ENCODE measurements at regions of chr11 and their contacts with region 1.

Region 1: GRCh38 chr11:95835768-95836488 is 45.6 kb downstream of the CEP57 start:
- DNase-seq: peak; percentile 60
- ATAC-seq: peak; percentile 93
- H3K4me3 Mint-ChIP-seq: no peak overlapping the region
- H3K27ac Mint-ChIP-seq: no peak overlapping the region
- H3K4me1 Mint-ChIP-seq: peaks cover 6% of the 10 kb centered on the region
- H3K27me3 Mint-ChIP-seq: no peaks in the 10 kb centered on the region
- CTCF ChIP-seq: peak; percentile 85

Region 2: DNA sequence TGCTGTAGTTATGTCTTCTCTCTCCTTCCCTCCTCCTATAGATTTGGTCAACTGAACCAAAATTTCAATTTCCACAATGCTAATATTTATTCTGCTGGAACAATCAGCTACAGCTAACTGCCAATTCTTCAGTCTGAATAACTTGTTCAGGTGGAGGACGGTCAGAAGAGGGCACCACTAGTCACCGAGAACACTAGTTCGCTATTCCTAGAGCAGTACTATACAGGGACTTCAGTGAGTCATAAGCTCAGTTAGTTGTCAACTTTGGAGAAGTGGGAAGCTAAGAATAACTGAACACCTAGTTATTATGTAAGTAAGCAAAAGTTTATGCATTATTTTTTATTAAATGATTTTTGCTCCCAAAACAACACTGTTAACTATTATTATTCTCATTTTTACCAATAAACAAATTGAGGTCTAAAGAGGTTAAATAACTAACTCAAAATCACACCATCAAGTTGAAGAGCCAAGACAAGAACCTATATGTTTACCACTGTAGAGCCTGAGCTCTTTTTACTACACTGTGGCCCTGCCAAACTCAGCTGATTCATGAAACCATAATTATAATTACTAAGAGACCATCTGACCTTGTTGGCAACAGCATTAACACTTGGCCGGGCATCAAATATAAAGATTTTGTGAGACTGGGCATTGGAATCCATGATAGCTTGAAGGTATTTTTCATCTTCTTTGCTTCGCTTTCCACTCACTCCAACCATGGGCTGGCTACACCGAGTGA is 13.3 kb after region 1 on chr11:
- CTCF ChIA-PET with region 1: interaction called, 14 read pairs
- POLR2A ChIA-PET with region 1: no interaction called
- intact Hi-C with region 1: no loop called
- DNase-seq: peak; percentile 44
- ATAC-seq: peak; percentile 66
- H3K4me3 Mint-ChIP-seq: no peak overlapping the region
- H3K27ac Mint-ChIP-seq: no peak overlapping the region
- H3K4me1 Mint-ChIP-seq: peaks cover 11% of the 10 kb centered on the region
- H3K27me3 Mint-ChIP-seq: no peaks in the 10 kb centered on the region
- CTCF ChIP-seq: peak; percentile 49

Region 3: GRCh38 chr11:96424693-96425092 is 588.8 kb after region 1 on chr11:
- CTCF ChIA-PET with region 1: interaction called, 29 read pairs
- POLR2A ChIA-PET with region 1: no interaction called
- intact Hi-C with region 1: loop called (anchors 5 kb)
- DNase-seq: no peak
- ATAC-seq: no peak
- H3K4me3 Mint-ChIP-seq: no peak overlapping the region
- H3K27ac Mint-ChIP-seq: no peak overlapping the region
- H3K4me1 Mint-ChIP-seq: peaks cover 4% of the 10 kb centered on the region
- H3K27me3 Mint-ChIP-seq: peaks cover 32% of the 10 kb centered on the region
- CTCF ChIP-seq: no peak

Measured in activated CD8-positive, alpha-beta T cell treated with anti-CD3 and anti-CD28 coated beads for 36 hours (primary cell).